ENCODE measurements at regions of chr4 and their contacts with region 1.

Region 1: DNA sequence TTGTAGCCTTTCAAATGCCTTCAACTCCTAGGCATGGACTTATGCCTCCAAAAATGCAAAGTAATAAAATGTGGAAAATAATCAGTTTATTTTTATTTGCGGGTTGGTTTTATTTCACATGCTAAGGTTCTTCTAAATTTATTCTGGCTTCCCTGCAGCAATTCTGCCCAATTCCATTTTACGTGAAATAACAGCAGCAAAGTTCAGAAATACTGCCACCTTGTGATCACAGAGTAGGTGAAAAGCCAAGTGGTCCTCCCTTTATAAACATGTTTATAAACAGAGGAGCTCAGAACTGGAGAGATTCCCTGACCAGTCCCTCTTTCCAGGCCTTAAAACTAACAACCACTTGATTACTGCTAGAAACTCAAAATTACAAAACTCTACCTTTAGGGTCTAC is 14.7 kb upstream of the DCHS2 start:
- DNase-seq: peak; percentile 8
- H3K4me3 Mint-ChIP-seq: no peak overlapping the region
- H3K27ac Mint-ChIP-seq: no peak overlapping the region
- H3K4me1 Mint-ChIP-seq: peaks cover 31% of the 10 kb centered on the region
- H3K27me3 Mint-ChIP-seq: no peaks in the 10 kb centered on the region
- CTCF ChIP-seq: peak; percentile 10

Region 2: GRCh38 chr4:154329268-154329868 is 176.9 kb before region 1 on chr4:
- CTCF ChIA-PET with region 1: interaction called, 3 read pairs
- intact Hi-C with region 1: loop called (anchors 1 kb)
- DNase-seq: no peak
- H3K4me3 Mint-ChIP-seq: no peak overlapping the region
- H3K27ac Mint-ChIP-seq: no peak overlapping the region
- H3K4me1 Mint-ChIP-seq: no peaks in the 10 kb centered on the region
- H3K27me3 Mint-ChIP-seq: no peaks in the 10 kb centered on the region
- CTCF ChIP-seq: no peak

Region 3: DNA sequence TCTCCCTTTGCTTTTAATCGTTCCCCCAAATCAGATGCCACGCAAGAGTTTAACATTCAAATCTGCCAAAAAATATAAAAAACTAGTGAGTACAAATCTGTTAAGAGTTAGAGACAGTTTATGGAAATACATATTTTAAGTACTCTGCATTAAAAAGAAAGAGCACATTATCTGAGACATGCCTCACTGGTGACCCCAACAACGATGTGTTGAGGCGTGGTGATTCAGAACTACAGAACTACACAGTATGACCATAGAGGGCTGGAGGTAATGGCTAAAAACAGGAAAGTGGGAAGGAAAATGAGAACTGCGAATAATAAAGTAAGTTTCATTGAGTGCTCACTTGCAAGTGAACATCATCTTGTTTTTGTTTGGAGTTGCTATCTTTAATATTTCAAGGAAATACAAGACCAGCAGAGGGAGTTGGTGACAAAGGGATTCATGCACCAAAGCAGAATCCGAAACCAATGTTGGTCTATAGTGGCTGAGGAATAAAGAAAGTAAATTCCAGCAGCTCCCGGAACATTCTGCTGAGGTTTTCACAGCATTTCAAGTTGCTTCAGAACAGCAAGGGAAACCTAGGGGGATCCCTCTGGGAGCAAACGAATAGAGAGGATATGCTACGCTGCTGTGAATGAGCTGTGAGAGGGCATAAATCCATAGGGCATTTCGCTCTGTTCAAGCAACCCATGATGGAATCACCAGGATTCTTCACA is 106.8 kb before region 1 on chr4:
- CTCF ChIA-PET with region 1: interaction called, 3 read pairs
- intact Hi-C with region 1: loop called (anchors 1 kb)
- DNase-seq: no peak
- H3K4me3 Mint-ChIP-seq: no peak overlapping the region
- H3K27ac Mint-ChIP-seq: no peak overlapping the region
- H3K4me1 Mint-ChIP-seq: no peaks in the 10 kb centered on the region
- H3K27me3 Mint-ChIP-seq: peaks cover 29% of the 10 kb centered on the region
- CTCF ChIP-seq: no peak

Region 4: DNA sequence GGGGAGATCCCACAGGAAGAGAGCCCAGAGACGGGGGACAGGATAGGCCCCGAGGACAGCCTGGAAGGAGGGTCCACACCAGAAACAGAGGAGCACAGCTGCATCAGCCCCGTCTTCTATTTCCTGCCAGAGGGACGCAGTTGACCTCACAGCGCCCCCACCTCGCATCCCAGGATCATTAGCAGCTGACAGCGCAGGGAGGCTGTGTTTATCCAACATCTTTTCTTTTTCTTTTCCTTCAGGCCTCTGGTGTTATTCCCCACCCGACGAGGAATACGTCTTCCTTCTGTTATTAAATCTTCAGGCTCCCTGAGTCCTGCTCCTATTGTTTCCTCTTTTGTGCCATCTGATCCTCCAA is 90.1 kb before region 1 on chr4:
- CTCF ChIA-PET with region 1: no interaction called
- intact Hi-C with region 1: loop called (anchors 5 kb)
- DNase-seq: peak; percentile 3
- H3K4me3 Mint-ChIP-seq: peak overlapping the region; percentile 74
- H3K27ac Mint-ChIP-seq: no peak overlapping the region
- H3K4me1 Mint-ChIP-seq: peaks cover 9% of the 10 kb centered on the region
- H3K27me3 Mint-ChIP-seq: no peaks in the 10 kb centered on the region
- CTCF ChIP-seq: no peak

Region 5: GRCh38 chr4:154578919-154579318 is 72.7 kb after region 1 on chr4:
- CTCF ChIA-PET with region 1: no interaction called
- intact Hi-C with region 1: no loop called
- DNase-seq: no peak
- H3K4me3 Mint-ChIP-seq: no peak overlapping the region
- H3K27ac Mint-ChIP-seq: no peak overlapping the region
- H3K4me1 Mint-ChIP-seq: no peaks in the 10 kb centered on the region
- H3K27me3 Mint-ChIP-seq: no peaks in the 10 kb centered on the region
- CTCF ChIP-seq: no peak

Region 6: GRCh38 chr4:154626793-154627484 is 120.7 kb after region 1 on chr4:
- CTCF ChIA-PET with region 1: no interaction called
- intact Hi-C with region 1: loop called (anchors 5 kb)
- DNase-seq: peak; percentile 86
- H3K4me3 Mint-ChIP-seq: no peak overlapping the region
- H3K27ac Mint-ChIP-seq: no peak overlapping the region
- H3K4me1 Mint-ChIP-seq: peaks cover 17% of the 10 kb centered on the region
- H3K27me3 Mint-ChIP-seq: no peaks in the 10 kb centered on the region
- CTCF ChIP-seq: peak; percentile 62

Region 7: DNA sequence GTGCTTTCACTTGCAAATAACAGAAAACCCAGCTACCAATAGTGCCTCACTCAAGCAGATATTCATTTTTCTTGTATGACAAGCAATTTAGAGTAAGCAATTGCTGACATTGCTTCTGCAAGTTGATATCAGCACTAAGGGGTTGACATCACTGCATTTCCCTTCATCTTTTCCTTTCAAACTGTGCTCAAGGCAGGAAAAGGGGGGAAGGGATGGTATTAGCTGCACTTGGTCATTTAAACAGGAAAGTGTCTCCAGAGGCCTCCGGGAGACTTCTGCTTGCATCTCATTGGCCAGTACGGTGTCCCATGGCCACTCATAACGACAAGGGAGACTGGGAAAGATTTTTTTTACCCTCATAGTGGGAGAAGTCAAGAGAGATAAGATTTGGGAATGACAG is 171.7 kb after region 1 on chr4:
- CTCF ChIA-PET with region 1: no interaction called
- intact Hi-C with region 1: no loop called
- DNase-seq: no peak
- H3K4me3 Mint-ChIP-seq: no peak overlapping the region
- H3K27ac Mint-ChIP-seq: no peak overlapping the region
- H3K4me1 Mint-ChIP-seq: no peaks in the 10 kb centered on the region
- H3K27me3 Mint-ChIP-seq: no peaks in the 10 kb centered on the region
- CTCF ChIP-seq: no peak

Region 8: DNA sequence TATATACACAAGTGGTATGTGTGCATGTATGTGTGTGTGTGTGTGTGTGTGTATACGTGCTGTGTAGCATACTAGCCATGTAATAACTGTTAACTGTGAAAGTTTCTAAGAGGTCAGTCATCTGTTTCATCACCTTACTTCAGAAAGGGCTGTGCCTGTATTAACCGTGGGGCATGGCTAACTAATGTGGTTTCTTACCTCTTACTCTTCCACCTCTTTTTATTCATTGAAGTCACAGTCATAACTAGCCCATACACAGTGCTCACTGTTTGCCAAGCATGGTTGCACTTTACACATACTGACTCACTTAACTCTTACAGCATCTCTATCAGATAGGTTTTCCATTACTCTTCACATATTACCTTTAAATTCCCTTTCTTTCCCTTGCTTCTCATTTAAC is 213.9 kb after region 1 on chr4:
- CTCF ChIA-PET with region 1: no interaction called
- intact Hi-C with region 1: no loop called
- DNase-seq: no peak
- H3K4me3 Mint-ChIP-seq: no peak overlapping the region
- H3K27ac Mint-ChIP-seq: peak overlapping the region; percentile 82
- H3K4me1 Mint-ChIP-seq: peaks cover 20% of the 10 kb centered on the region
- H3K27me3 Mint-ChIP-seq: no peaks in the 10 kb centered on the region
- CTCF ChIP-seq: no peak